H1 (cell line): ENCODE measurements at regions of chr5 and their contacts with region 1.

Region 1: GRCh38 chr5:82312373-82312856 is 34.3 kb upstream of the RPS23 start:
- DNase-seq: peak; percentile 21 to 82
- H3K4me3 ChIP-seq: no peak overlapping the region
- H3K27ac ChIP-seq: no peak overlapping the region
- H3K4me1 ChIP-seq: peaks cover 0 to 9% (median 0%) of the 10 kb centered on the region in 4 experiments; a peak in 3 of 7 replicates
- H3K27me3 ChIP-seq: no peaks in the 10 kb centered on the region
- CTCF ChIP-seq: peak; percentile 79 to 97 (median 90)
- EP300 ChIP-seq: no peak
- POLR2A ChIP-seq: no peak
- RAD21 ChIP-seq: peak; percentile 94 to 95

Region 2: DNA sequence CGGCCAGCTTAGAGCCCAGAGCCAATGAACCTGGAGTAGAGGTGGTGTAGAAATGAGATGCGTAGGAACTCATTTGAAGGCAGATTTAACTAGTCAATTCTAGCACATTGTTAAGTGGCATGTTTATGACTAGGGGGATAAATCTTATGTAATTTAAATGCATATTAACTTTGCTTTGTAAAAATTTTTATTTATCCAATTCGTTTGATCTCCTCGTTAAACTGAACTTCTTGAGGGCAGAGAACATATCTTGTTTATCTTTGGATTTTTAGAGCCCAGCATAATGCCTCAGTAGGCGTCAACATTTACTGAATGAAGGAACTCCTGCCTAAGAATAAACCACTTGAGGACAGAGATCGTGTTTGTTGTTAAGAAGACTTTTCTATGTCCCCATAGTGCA is 877.4 kb before region 1 on chr5:
- CTCF ChIA-PET with region 1: no interaction called
- POLR2A ChIA-PET with region 1: no interaction called
- DNase-seq: no peak
- H3K4me3 ChIP-seq: no peak overlapping the region
- H3K27ac ChIP-seq: no peak overlapping the region
- H3K4me1 ChIP-seq: no peaks in the 10 kb centered on the region
- H3K27me3 ChIP-seq: no peaks in the 10 kb centered on the region
- CTCF ChIP-seq: no peak
- EP300 ChIP-seq: no peak
- POLR2A ChIP-seq: no peak
- RAD21 ChIP-seq: no peak

Region 3: GRCh38 chr5:81696418-81697397 is 615.7 kb before region 1 on chr5:
- CTCF ChIA-PET with region 1: no interaction called
- POLR2A ChIA-PET with region 1: no interaction called
- DNase-seq: no peak
- H3K4me3 ChIP-seq: no peak overlapping the region
- H3K27ac ChIP-seq: no peak overlapping the region
- H3K4me1 ChIP-seq: no peaks in the 10 kb centered on the region
- H3K27me3 ChIP-seq: no peaks in the 10 kb centered on the region
- CTCF ChIP-seq: no peak
- EP300 ChIP-seq: no peak
- POLR2A ChIP-seq: no peak
- RAD21 ChIP-seq: no peak

Region 4: DNA sequence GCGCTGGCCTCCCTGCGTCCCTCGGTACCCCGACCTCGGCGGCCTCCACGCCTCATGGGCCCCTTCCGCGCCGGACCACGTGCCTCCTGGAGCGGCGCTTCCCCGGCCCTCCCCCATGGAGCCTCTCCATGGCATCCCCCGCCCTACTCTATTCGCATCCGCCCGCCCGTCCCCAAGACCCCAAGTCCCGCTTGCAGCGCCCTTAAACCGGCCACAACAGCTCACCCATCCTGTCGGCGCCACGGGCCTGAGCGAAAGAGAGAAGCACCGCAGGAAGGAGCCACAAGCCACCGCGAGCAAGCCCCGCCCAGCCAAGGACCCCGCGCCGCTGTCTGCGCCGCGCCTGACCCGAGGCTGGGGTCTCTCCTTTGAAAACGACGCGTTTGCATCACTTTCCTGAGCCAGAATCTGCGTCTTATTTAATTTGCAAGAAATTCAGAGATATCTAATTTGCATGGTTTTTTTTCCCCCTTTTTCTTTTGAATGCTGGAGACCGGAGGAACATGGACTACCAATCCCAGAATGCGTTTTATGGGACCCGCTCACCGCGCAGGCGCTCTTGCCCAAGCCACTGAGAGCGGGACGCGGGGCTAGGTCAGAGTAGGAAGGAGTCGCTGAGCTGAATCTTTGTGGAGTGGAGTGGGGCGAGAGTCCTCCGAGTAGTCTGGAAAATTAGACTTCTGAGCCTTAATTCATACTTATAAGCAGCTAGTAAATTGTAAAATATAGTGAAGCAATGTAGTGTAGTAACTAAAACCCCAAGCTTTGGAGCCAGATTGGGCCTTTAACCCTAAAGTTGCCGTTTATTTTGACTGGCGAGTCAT is 34.1 kb before region 1 on chr5 and contains the start of gene RPS23:
- CTCF ChIA-PET with region 1: interaction called, 3 read pairs
- POLR2A ChIA-PET with region 1: interaction called, 15 read pairs
- DNase-seq: peak in 1 of 2 experiments; percentile 89
- H3K4me3 ChIP-seq: peak within 1 kb of the TSS; percentile 98 to 100 (median 99)
- H3K27ac ChIP-seq: peak within 1 kb of the TSS; percentile 92
- H3K4me1 ChIP-seq: peaks cover 3 to 7% (median 6%) of the 10 kb centered on the region in 4 experiments; a peak in 6 of 7 replicates
- H3K27me3 ChIP-seq: no peaks in the 10 kb centered on the region
- CTCF ChIP-seq: no peak
- EP300 ChIP-seq: no peak
- POLR2A ChIP-seq: peak; percentile 89 to 95; a peak in 2 of 3 replicates
- RAD21 ChIP-seq: no peak
- total RNA-seq, gene RPS23: 2,559 and 2,561 TPM in 2 replicates

Region 5: DNA sequence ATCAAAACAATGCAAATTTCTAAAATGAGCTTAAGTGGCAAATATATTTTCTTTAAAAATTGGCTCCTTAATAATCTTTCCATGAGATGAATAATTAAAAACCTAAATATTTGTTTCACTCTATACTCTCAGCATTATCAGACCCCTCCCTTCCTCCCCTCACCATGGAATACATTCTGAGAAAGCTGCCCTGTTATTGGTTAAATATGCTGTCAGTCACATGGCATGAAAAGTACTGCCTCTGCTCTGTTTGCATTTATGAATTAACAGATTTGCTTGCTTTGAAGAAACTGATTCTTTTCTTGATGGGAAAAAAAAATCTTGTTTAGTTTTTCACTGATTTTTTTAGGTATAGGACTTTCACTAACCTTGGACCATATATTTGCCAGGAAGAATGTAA is 17.3 kb before region 1 on chr5:
- CTCF ChIA-PET with region 1: interaction called, 11 read pairs
- POLR2A ChIA-PET with region 1: interaction called, 9 read pairs
- DNase-seq: no peak
- H3K4me3 ChIP-seq: no peak overlapping the region
- H3K27ac ChIP-seq: no peak overlapping the region
- H3K4me1 ChIP-seq: peaks cover 8 to 18% (median 10%) of the 10 kb centered on the region in 4 experiments; a peak in 6 of 7 replicates
- H3K27me3 ChIP-seq: peaks cover 0 to 1% (median 0%) of the 10 kb centered on the region in 4 experiments; a peak in 4 of 7 replicates
- CTCF ChIP-seq: no peak
- EP300 ChIP-seq: no peak
- POLR2A ChIP-seq: no peak
- RAD21 ChIP-seq: no peak

Region 6: GRCh38 chr5:82351754-82352145 is 39.3 kb after region 1 on chr5:
- CTCF ChIA-PET with region 1: interaction called, 130 read pairs
- POLR2A ChIA-PET with region 1: no interaction called
- DNase-seq: no peak
- H3K4me3 ChIP-seq: no peak overlapping the region
- H3K27ac ChIP-seq: no peak overlapping the region
- H3K4me1 ChIP-seq: peaks cover 0 to under 1% (median 0%) of the 10 kb centered on the region in 4 experiments; a peak in 1 of 7 replicates
- H3K27me3 ChIP-seq: no peaks in the 10 kb centered on the region
- CTCF ChIP-seq: peak in 2 of 3 experiments; percentile 60 to 74; a peak in 3 of 4 replicates
- EP300 ChIP-seq: no peak
- POLR2A ChIP-seq: no peak
- RAD21 ChIP-seq: peak; percentile 90 to 92

Region 7: DNA sequence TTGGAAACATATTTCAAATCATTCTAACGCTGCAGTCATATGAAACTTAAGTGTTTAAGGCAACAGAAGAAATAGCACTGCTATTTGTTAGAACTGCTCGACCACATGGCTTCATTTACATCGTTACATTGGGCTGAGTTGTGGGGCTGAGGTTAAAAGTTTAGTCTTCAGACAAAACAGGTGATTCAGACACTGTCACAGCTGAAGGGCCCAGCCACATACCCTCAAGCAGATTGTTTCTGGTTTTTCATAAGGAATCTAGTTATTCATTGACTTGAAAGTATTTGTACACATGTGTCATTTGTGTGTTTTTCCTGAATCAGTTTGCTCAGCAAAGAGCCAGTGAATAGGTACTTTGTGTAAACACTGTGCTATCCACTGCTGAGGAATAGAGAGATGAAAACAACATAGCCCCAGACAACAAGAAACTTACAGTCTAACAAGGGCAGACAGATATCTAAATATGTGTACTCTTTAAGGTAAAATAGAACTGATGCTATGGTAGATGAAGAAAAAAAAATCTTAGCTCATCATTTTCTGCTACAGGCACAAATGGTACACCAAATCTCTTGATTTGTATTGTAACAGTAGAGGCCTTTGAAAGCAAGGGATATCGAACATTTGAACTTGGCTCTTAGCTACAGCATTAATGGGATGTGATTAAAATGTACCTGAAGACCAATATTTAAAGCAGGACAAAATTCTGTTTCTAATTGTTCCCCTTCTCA is 323.3 kb after region 1 on chr5:
- CTCF ChIA-PET with region 1: no interaction called
- POLR2A ChIA-PET with region 1: no interaction called
- DNase-seq: no peak
- H3K4me3 ChIP-seq: no peak overlapping the region
- H3K27ac ChIP-seq: no peak overlapping the region
- H3K4me1 ChIP-seq: peaks cover 0 to 6% (median 3%) of the 10 kb centered on the region in 4 experiments; a peak in 4 of 7 replicates
- H3K27me3 ChIP-seq: no peaks in the 10 kb centered on the region
- CTCF ChIP-seq: no peak
- EP300 ChIP-seq: no peak
- POLR2A ChIP-seq: no peak
- RAD21 ChIP-seq: no peak

Region 8: DNA sequence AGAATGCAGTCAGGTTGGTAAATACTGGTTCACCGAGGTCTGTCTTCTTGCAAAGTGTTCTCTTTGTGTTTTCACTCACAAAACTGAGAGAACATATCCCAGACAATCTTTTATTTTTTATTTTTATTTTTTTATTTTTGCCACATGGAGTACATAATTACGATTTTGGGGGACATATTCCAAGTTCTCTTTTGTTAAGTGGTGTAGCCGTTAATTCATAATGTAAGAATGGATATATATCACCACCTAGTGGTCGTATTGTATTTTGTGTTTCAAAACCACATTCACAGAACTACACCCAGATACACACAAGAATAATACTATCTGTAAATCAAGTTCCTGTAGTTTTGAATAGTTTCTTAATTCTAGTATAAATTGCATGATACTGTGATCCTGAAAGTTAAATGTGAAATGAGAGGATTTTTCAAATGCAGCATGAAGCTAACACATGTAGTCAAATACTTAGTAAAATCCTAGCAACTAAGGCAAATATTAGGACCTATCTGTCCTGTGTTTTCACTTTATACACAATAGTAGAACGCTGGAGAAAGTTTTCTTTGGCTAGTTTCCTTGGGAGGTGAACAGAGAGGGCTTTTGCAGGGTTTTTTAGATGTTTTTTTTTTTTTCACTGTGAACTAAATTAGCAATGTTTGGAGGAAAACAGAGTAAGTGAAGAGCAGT is 1251.8 kb after region 1 on chr5:
- CTCF ChIA-PET with region 1: interaction called, 13 read pairs
- POLR2A ChIA-PET with region 1: no interaction called
- DNase-seq: no peak
- H3K4me3 ChIP-seq: no peak overlapping the region
- H3K27ac ChIP-seq: no peak overlapping the region
- H3K4me1 ChIP-seq: no peaks in the 10 kb centered on the region; a peak in 1 of 7 replicates
- H3K27me3 ChIP-seq: no peaks in the 10 kb centered on the region
- CTCF ChIP-seq: peak in 1 of 3 experiments; percentile 48; a peak in 2 of 4 replicates
- EP300 ChIP-seq: no peak
- POLR2A ChIP-seq: no peak
- RAD21 ChIP-seq: peak; percentile 51 to 56